ENCODE measurements at regions of chr16 and their contacts with region 1.

Region 1: DNA sequence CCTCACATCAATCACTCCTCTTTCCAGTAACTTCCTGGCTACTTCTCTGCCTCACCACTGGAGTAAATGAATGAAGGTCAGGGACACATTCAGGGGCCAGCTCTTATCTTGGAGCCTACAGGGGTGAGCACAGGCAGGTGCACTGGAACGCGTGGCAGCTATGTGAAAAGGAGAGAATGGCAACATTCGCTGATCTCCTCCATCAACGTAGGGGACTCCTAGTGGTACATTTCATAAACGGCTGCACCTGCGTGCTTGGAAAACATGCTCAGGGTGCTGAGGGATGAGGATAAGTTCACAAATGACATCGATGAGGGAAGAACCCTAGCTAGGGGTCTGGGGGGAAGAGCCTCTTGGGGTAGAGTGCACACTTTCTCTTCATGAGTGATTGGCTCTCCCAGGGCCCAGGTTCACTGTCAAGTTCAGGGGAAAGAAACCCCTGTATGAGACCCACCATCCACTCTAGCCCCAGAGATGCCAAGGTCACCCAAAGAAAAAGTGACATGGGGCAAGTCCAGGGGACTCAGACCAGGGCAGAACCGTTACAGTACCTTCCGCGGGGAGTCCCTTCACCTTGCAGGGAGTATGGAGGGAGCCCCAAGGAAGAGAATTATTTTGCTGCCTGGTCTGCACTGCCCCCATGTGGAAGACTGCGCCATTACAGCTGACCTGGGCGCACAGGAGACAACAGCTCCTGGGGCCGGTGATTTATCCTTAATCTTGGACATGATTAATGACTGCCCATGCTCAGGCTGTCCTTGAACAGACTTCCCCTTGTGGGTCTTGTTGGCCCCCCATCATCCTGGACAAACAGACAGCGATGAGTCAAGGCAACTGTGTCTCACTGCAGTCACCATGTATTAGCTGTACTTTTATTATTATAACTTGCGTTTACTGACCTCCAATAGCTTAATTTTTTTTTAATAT is 30.1 kb downstream of the VAC14 start:
- DNase-seq: peak; percentile 39 to 80 (median 59)
- ATAC-seq: peak; percentile 93
- H3K4me3 ChIP-seq: no peak overlapping the region
- H3K4me3 Mint-ChIP-seq: no peak overlapping the region
- H3K27ac ChIP-seq: no peak overlapping the region
- H3K27ac Mint-ChIP-seq: no peak overlapping the region
- H3K4me1 ChIP-seq: no peaks in the 10 kb centered on the region
- H3K4me1 Mint-ChIP-seq: no peaks in the 10 kb centered on the region
- H3K27me3 ChIP-seq: no peaks in the 10 kb centered on the region
- H3K27me3 Mint-ChIP-seq: no peaks in the 10 kb centered on the region
- CTCF ChIP-seq: peak; percentile 95

Region 2: GRCh38 chr16:70529051-70529777 is 241.7 kb before region 1 on chr16:
- CTCF ChIA-PET with region 1: no interaction called
- POLR2A ChIA-PET with region 1: no interaction called
- intact Hi-C with region 1: loop called (anchors 2 to 10 kb)
- DNase-seq: peak in 2 of 9 experiments; percentile 43 to 59
- ATAC-seq: peak; percentile 32
- H3K4me3 ChIP-seq: no peak overlapping the region
- H3K4me3 Mint-ChIP-seq: peak overlapping the region; percentile 46
- H3K27ac ChIP-seq: no peak overlapping the region
- H3K27ac Mint-ChIP-seq: peak overlapping the region; percentile 64
- H3K4me1 ChIP-seq: peaks cover 32% of the 10 kb centered on the region
- H3K4me1 Mint-ChIP-seq: peaks cover 50% of the 10 kb centered on the region
- H3K27me3 ChIP-seq: no peaks in the 10 kb centered on the region
- H3K27me3 Mint-ChIP-seq: no peaks in the 10 kb centered on the region
- CTCF ChIP-seq: peak; percentile 65

Region 3: DNA sequence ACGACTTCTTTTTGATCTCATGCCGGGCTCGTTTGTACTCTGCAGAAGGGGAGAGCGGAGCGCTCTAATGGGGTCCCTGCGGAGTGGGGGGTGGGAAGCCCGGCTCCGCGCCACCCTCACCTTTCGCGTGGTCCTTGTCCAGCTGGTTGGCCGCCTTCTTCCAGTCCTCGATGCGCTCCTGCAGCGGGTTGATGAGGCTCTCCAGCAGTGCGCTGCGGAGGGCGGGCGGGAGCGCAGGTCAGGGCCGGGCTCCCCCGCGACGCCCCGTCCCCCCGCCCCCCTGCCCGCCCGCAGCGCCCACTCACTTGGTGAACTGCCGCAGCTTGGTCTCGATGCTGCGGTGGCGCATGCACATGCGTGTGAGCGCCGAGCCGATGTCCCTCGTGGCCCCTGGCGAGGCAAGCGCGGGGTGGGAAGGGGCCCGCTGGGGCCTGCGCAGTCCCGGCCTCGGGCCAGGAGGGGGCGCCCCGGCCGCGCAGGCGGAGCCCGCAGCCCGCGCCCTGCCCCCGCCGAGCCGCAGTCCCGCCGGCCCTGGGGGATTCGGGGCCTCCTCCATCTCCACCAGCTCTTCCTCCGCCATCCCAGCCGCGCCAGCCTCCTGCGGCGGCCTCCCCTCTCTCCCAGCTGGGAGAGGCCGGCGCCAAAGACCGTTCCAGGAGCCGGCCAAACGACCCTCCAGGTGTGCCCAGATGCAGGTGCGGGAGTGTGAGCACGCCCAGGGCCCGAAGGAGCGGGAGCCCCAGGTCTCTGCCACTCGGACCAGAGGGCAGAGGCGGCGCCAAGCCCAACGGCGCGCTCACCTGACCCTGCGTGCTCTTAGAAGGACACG is 91.0 kb before region 1 on chr16:
- CTCF ChIA-PET with region 1: interaction called, 59 read pairs
- POLR2A ChIA-PET with region 1: no interaction called
- intact Hi-C with region 1: loop called in 1 of 2 experiments (anchors 1 kb)
- DNase-seq: peak in 4 of 9 experiments; percentile 12 to 33 (median 24)
- ATAC-seq: peak; percentile 55
- H3K4me3 ChIP-seq: no peak overlapping the region
- H3K4me3 Mint-ChIP-seq: no peak overlapping the region
- H3K27ac ChIP-seq: no peak overlapping the region
- H3K27ac Mint-ChIP-seq: no peak overlapping the region
- H3K4me1 ChIP-seq: peaks cover 12% of the 10 kb centered on the region
- H3K4me1 Mint-ChIP-seq: peaks cover 12% of the 10 kb centered on the region
- H3K27me3 ChIP-seq: no peaks in the 10 kb centered on the region
- H3K27me3 Mint-ChIP-seq: no peaks in the 10 kb centered on the region
- CTCF ChIP-seq: peak; percentile 24

Region 4: DNA sequence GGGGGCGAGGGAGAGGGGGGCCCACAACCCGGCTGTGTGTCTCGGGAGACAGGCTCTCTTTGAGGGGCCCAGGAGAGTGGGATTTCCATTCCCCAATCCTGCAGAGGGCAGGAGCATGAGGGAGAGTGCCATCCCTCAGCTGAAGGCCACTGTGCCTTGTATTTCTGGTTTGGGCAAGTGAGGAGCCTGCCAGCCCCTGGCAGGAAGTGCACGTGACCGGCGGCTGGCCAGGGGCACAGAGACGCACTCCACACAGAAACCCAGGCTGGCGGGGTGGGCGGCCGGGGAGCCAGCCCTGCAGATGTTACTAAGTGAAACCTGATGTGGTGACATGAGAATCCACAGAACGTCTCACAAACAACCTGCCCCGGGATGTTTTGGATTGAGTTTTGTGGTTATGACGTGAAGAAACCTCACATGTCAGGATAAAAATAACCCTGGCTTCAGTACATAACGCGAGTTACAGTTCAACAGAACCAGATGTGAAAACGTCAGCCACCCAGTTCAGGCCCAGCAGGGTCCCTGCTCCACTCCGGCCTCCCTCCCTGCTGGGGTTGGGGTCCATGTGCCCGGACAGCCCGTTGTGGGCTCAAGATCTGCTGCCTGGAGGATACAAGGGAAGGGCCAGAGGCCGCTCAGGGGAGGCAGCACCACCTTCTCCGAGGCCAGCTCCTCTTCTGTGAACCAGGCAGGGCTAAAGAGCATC is 33.4 kb before region 1 on chr16:
- CTCF ChIA-PET with region 1: interaction called, 13 read pairs
- POLR2A ChIA-PET with region 1: interaction called, 3 read pairs
- intact Hi-C with region 1: loop called (anchors 1 to 2 kb)
- DNase-seq: peak; percentile 56 to 93 (median 78)
- ATAC-seq: peak; percentile 82
- H3K4me3 ChIP-seq: peak overlapping the region; percentile 33 to 34
- H3K4me3 Mint-ChIP-seq: peak overlapping the region; percentile 77
- H3K27ac ChIP-seq: peak overlapping the region; percentile 89 to 92
- H3K27ac Mint-ChIP-seq: peak overlapping the region; percentile 100
- H3K4me1 ChIP-seq: peaks cover 67% of the 10 kb centered on the region
- H3K4me1 Mint-ChIP-seq: peaks cover 65% of the 10 kb centered on the region
- H3K27me3 ChIP-seq: no peaks in the 10 kb centered on the region
- H3K27me3 Mint-ChIP-seq: no peaks in the 10 kb centered on the region
- CTCF ChIP-seq: no peak

Region 5: GRCh38 chr16:70759666-70760065 is 11.2 kb before region 1 on chr16:
- CTCF ChIA-PET with region 1: interaction called, 14 read pairs
- POLR2A ChIA-PET with region 1: no interaction called
- intact Hi-C with region 1: no loop called
- DNase-seq: no peak
- ATAC-seq: no peak
- H3K4me3 ChIP-seq: no peak overlapping the region
- H3K4me3 Mint-ChIP-seq: no peak overlapping the region
- H3K27ac ChIP-seq: no peak overlapping the region
- H3K27ac Mint-ChIP-seq: no peak overlapping the region
- H3K4me1 ChIP-seq: no peaks in the 10 kb centered on the region
- H3K4me1 Mint-ChIP-seq: no peaks in the 10 kb centered on the region
- H3K27me3 ChIP-seq: no peaks in the 10 kb centered on the region
- H3K27me3 Mint-ChIP-seq: no peaks in the 10 kb centered on the region
- CTCF ChIP-seq: no peak